CD4-positive, alpha-beta T cell (primary cell): ENCODE measurements at regions of chr9 and their contacts with region 1.

Region 1: DNA sequence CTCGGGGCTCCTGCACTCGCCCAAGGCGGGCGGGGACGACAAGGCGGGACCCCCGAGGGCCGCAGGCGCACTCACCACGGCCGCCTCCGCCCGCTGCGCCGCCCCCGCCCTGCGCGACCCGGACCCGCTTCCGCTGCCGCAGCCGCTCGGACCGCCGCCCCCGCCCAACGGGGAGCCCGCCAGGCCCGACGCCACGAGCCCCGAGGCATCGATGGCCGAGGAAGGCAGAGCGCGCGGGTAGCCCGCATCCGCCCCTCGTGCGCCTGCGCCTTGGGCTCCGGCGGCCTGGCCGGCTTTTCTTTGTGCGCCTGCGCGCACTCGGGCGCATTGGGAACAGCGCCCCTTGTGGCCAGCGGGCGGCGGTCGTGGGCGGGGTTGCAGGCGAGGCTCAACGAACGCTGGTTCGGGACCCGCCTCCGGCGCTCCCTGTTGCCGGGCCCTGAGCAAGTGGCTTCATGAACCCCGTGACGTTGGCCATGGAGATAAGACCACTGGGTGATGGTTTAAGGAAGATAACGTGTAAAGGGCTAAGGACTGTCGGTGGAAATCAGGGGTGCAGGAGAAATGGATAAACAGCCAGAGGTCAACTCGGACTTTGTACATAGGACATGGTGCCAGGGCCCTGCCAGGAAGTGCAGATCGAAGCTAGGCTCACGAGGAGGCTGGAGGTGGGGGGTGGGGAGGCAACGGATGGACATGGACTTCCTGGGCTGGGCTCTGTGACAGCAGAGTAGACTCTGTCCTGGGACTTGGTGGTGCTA is at the starts of genes C8G and FBXW5:
- DNase-seq: peak; percentile 84 to 97 (median 94)
- ATAC-seq: peak; percentile 86
- H3K4me3 ChIP-seq: peak within 1 kb of the TSS; percentile 69
- H3K4me3 Mint-ChIP-seq: peak within 1 kb of the TSS; percentile 87
- H3K27ac ChIP-seq: peak within 1 kb of the TSS in 1 of 2 donors; percentile 21
- H3K27ac Mint-ChIP-seq: peak within 1 kb of the TSS; percentile 59
- H3K4me1 ChIP-seq: peaks cover 49% of the 10 kb centered on the region
- H3K4me1 Mint-ChIP-seq: peaks cover 5% of the 10 kb centered on the region
- H3K27me3 ChIP-seq: no peaks in the 10 kb centered on the region
- H3K27me3 Mint-ChIP-seq: no peaks in the 10 kb centered on the region
- CTCF ChIP-seq: peak; percentile 96
- total RNA-seq, gene C8G: not detected
- total RNA-seq, gene FBXW5: 41.0 to 41.7 TPM

Region 2: DNA sequence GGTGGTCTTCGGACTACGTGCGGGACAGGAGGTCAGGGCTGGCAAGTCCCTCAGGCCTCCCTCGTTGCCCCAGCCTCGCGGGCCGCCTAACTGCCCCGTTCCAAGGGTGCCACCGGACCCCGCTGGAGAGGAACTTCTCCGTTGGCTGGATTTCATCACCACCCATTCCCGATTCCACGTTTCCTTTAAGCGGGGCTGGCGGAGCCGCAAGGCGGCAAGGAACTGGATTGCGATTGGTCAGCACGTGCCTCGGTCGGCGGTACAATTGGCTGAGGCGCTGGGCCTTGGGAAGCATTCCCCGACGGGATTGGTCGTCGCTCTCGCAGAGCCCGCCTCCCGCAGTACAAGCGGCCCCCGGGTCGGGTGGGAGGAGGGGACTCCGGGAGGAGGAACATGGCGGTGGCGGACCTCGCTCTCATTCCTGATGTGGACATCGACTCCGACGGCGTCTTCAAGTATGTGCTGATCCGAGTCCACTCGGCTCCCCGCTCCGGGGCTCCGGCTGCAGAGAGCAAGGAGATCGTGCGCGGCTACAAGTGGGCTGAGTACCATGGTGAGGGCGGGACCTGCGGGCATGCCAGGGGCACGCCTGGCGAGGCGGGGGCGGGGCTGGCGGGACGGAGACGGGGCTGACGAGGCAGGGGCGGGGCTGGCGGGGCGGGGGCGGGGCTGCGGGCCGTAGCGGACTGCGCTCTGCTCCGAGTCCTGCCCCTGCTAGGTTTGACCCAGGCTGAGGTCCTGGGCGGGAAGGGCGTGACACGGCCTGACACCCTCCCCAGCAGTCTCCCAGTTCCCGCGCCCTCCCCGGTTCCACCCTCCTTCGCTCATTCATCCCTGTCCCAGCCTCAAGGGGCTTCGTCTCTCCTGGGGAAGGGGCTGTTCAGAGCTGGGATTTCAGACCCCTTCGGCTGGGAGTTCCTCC is 95.4 kb before region 1 on chr9 and contains the start of gene PHPT1:
- CTCF ChIA-PET with region 1: no interaction called
- POLR2A ChIA-PET with region 1: no interaction called
- intact Hi-C with region 1: loop called (anchors 1 to 10 kb)
- DNase-seq: peak; percentile 89 to 98 (median 94)
- ATAC-seq: peak; percentile 92
- H3K4me3 ChIP-seq: peak within 1 kb of the TSS; percentile 84
- H3K4me3 Mint-ChIP-seq: peak within 1 kb of the TSS; percentile 97
- H3K27ac ChIP-seq: peak within 1 kb of the TSS in 1 of 2 donors; percentile 60
- H3K27ac Mint-ChIP-seq: peak within 1 kb of the TSS; percentile 91
- H3K4me1 ChIP-seq: peaks cover 45% of the 10 kb centered on the region
- H3K4me1 Mint-ChIP-seq: peaks cover 10% of the 10 kb centered on the region
- H3K27me3 ChIP-seq: peaks cover 15 to 16% of the 10 kb centered on the region in 2 experiments
- H3K27me3 Mint-ChIP-seq: peaks cover 21% of the 10 kb centered on the region
- CTCF ChIP-seq: no peak
- total RNA-seq, gene PHPT1: 13.6 to 17.8 TPM

Region 3: GRCh38 chr9:136902259-136902821 is 42.4 kb before region 1 on chr9:
- CTCF ChIA-PET with region 1: no interaction called
- POLR2A ChIA-PET with region 1: no interaction called
- intact Hi-C with region 1: no loop called
- DNase-seq: peak; percentile 45 to 95 (median 76)
- ATAC-seq: peak; percentile 85
- H3K4me3 ChIP-seq: peak overlapping the region; percentile 53
- H3K4me3 Mint-ChIP-seq: peak overlapping the region; percentile 67
- H3K27ac ChIP-seq: peak overlapping the region; percentile 94 to 95
- H3K27ac Mint-ChIP-seq: peak overlapping the region; percentile 91
- H3K4me1 ChIP-seq: peaks cover 44% of the 10 kb centered on the region
- H3K4me1 Mint-ChIP-seq: peaks cover 35% of the 10 kb centered on the region
- H3K27me3 ChIP-seq: no peaks in the 10 kb centered on the region
- H3K27me3 Mint-ChIP-seq: no peaks in the 10 kb centered on the region
- CTCF ChIP-seq: no peak